ENCODE measurements at regions of chr9 and their contacts with region 1.

Region 1: DNA sequence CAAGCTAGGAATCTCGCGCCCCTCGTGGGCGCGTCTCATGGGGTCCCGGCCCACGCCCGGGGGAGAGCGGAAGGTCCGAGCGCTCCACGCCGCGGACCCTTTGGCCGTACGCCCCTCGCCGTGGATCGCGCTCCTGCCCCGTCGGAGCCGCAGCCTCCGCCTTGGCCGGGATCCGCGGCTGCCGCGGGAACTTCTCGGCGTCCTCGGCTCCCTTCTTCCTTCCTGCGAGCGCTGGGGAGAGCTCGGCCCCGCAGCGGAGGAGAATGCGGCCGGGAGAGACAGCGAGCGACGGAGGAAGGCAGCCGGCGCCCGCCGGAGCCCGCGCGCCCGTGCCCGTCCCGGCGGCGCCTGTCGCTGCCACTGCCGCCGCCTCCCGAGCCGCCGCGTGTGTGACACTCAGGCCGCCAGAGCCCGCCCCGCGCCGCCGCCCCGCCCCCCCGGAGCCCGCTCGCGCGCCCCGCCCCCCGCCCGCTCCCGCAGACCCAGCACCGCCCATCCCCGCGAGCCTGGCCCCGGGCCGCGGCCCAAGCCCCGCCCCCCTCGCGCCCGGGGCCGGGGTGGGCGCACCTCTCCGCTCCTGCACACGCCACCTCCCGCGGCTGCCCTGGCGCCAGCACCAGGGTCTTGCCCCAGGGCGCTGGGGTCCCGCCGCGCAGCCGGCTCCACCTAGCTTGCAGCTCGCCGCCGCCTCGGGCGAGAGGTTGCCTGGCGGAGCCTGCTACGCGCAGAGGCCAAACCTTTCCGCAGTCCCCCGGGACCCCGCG is at the start of gene SHB:
- DNase-seq: peak; percentile 65
- H3K4me3 Mint-ChIP-seq: peak within 1 kb of the TSS; percentile 78
- H3K27ac Mint-ChIP-seq: peak within 1 kb of the TSS; percentile 4
- H3K4me1 Mint-ChIP-seq: peaks cover 23% of the 10 kb centered on the region
- H3K27me3 Mint-ChIP-seq: peaks cover 30% of the 10 kb centered on the region
- total RNA-seq, gene SHB: 1.2 and 1.7 TPM in 2 replicates

Region 2: GRCh38 chr9:37485389-37486219 is 583.4 kb before region 1 on chr9 and contains the start of gene POLR1E:
- intact Hi-C with region 1: loop called (anchors 1 kb)
- DNase-seq: peak; percentile 95
- H3K4me3 Mint-ChIP-seq: peak within 1 kb of the TSS; percentile 96
- H3K27ac Mint-ChIP-seq: peak within 1 kb of the TSS; percentile 92
- H3K4me1 Mint-ChIP-seq: peaks cover 31% of the 10 kb centered on the region
- H3K27me3 Mint-ChIP-seq: peaks cover 8% of the 10 kb centered on the region
- total RNA-seq, gene POLR1E: 59.8 and 61.0 TPM in 2 replicates

Region 3: GRCh38 chr9:37753489-37754190 is 315.4 kb before region 1 on chr9 and contains the start of gene TRMT10B:
- intact Hi-C with region 1: loop called (anchors 2 kb)
- DNase-seq: peak; percentile 65
- H3K4me3 Mint-ChIP-seq: peak within 1 kb of the TSS; percentile 95
- H3K27ac Mint-ChIP-seq: peak within 1 kb of the TSS; percentile 82
- H3K4me1 Mint-ChIP-seq: peaks cover 27% of the 10 kb centered on the region
- H3K27me3 Mint-ChIP-seq: no peaks in the 10 kb centered on the region
- total RNA-seq, gene TRMT10B: 10.0 and 11.8 TPM in 2 replicates

Region 4: DNA sequence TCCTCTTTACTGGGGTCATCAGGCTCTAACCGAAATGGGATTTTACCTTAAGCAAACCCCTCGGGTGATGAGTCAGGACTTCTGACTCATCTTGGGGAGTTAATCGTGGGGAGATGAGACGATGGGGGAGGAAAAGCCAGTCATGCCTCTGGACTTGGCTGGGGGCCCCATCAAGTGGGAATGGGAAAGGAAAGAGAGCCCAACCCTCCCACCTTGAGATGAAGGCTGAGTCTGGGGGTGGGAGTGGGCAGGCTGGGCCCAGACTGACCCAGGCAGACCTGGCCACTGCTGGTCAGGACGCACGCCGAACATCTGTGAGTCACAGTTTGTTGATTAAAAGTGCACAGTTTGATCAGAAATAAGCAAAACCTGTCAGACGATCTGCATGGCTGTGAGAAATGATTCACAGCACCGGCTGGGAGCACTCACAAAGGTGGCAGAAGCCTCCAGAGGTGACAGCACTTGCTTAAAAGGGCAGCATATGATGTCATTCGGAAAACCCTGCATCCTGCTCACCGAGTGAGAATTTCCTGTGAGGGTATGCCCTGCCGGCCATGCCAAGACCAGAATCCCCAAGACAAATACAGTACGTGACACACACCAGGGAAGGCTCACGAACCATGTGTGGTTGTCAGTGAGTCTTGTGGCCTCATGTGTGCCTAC is 115.1 kb before region 1 on chr9:
- intact Hi-C with region 1: loop called (anchors 5 kb)
- DNase-seq: peak; percentile 15
- H3K4me3 Mint-ChIP-seq: peak overlapping the region; percentile 27
- H3K27ac Mint-ChIP-seq: peak overlapping the region; percentile 81
- H3K4me1 Mint-ChIP-seq: peaks cover 38% of the 10 kb centered on the region
- H3K27me3 Mint-ChIP-seq: no peaks in the 10 kb centered on the region

Region 5: DNA sequence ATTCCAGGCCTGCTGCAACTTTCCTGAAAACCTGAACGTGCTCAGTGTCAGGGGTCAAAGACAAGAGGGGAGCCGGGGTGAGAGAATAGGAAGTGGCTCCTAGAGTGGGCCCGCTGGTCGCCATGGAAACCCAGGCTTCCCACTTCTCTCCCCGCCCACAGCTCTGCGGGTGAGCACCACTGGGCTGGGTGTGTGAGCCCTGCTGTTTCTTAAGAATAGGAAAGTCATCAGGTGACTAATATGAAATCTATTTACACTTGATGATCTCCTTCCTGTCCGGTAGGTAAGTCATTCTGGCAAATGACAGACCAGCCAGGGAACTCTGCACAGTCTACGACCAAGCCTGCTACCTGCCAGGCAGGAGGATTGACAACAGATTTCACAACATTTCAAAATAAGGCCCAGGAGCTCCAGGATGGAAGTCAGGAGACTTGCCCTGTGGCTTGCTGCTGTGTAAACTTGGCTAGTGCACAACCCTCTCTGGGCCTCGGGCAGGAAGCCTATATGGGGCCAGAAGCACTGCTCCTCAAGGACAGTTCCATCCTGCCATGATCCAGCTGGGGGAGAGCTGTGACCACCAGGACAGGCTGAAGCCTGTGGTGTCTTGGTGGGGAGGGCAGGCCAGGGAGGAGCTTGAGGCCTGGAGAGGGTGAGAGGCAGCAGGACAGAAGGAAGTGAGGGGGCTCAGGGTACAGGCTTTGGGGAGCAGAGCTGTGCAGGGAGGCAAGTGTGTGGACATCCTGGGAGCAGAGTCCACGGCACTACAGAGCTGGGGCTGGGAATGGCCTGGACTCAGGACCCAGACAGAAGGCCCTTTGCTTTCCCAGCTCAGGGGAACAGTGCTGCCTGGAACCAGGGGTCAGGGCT is 60.6 kb before region 1 on chr9:
- intact Hi-C with region 1: no loop called
- DNase-seq: no peak
- H3K4me3 Mint-ChIP-seq: no peak overlapping the region
- H3K27ac Mint-ChIP-seq: peak overlapping the region; percentile 69
- H3K4me1 Mint-ChIP-seq: peaks cover 17% of the 10 kb centered on the region
- H3K27me3 Mint-ChIP-seq: no peaks in the 10 kb centered on the region

Region 6: GRCh38 chr9:38026021-38026809 is 42.8 kb before region 1 on chr9:
- intact Hi-C with region 1: loop called (anchors 5 kb)
- DNase-seq: no peak
- H3K4me3 Mint-ChIP-seq: no peak overlapping the region
- H3K27ac Mint-ChIP-seq: no peak overlapping the region
- H3K4me1 Mint-ChIP-seq: no peaks in the 10 kb centered on the region
- H3K27me3 Mint-ChIP-seq: peaks cover 4% of the 10 kb centered on the region

Region 7: GRCh38 chr9:38318759-38319495 is 249.9 kb after region 1 on chr9:
- intact Hi-C with region 1: no loop called
- DNase-seq: peak; percentile 11
- H3K4me3 Mint-ChIP-seq: no peak overlapping the region
- H3K27ac Mint-ChIP-seq: no peak overlapping the region
- H3K4me1 Mint-ChIP-seq: peaks cover 8% of the 10 kb centered on the region
- H3K27me3 Mint-ChIP-seq: no peaks in the 10 kb centered on the region

Region 8: DNA sequence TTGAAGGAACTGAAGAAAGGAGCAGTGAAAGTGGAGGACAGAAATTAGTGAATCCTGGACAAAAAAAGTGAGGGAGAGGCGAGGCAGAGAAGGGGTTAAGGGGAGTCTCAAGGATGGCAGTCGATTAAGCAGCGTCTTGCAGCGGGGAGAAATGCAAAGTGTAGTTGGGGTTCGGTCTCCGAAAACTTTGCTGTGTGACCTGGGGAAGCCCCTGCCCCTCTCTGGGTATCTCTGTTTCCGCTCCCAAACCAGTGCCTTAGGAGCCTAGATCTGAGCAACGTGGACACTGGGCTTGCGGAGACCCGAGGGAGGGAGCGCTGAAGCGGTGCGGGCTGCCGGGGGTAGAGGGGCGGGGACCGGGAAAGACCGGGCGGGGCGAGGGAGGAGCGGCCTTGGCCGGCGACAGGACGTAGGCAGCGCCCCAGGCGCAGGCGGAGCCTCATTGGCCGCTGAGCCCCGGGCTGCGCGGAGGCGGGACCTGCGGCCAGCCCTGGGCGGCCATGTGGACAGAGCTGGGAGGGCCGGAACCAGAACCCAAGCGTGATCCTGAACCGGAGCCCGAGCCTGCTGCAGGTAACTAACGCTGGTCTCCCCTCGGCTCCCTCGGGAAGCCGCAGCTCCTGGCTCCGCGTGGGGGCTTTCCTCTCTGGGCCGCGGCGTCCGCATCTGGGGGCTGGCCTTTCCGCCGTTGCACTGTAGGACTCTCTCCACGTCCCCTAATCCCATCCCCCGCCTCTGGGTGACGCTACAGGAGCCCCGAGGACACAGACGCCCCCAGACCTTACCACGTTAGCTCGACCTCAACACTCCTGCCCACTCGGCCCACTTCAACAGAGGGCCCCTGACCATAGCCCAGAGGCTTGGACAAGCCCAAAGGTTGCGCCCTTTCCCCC is 323.4 kb after region 1 on chr9 and contains the start of gene ALDH1B1:
- intact Hi-C with region 1: loop called (anchors 2 kb)
- DNase-seq: peak; percentile 74
- H3K4me3 Mint-ChIP-seq: peak within 1 kb of the TSS; percentile 95
- H3K27ac Mint-ChIP-seq: peak within 1 kb of the TSS; percentile 87
- H3K4me1 Mint-ChIP-seq: peaks cover 11% of the 10 kb centered on the region
- H3K27me3 Mint-ChIP-seq: peaks cover 15% of the 10 kb centered on the region
- total RNA-seq, gene ALDH1B1: 31.2 and 31.4 TPM in 2 replicates

Measured in activated T-helper 1 cell treated with anti-CD3 and anti-CD28 coated beads, Interleukin-12 subunit alpha, Interleukin-12 subunit beta, Interleukin-2, Interleukin-4 antibody, amounts not matched to agents 30 ng/mL and 10 ng/mL and 1 ng/mL, durations not matched to agents 14 hours and 24 hours and 36 hours (primary cell).